T-cell (primary cell): ENCODE measurements at regions of chr14 and their contacts with region 1.

Region 1: DNA sequence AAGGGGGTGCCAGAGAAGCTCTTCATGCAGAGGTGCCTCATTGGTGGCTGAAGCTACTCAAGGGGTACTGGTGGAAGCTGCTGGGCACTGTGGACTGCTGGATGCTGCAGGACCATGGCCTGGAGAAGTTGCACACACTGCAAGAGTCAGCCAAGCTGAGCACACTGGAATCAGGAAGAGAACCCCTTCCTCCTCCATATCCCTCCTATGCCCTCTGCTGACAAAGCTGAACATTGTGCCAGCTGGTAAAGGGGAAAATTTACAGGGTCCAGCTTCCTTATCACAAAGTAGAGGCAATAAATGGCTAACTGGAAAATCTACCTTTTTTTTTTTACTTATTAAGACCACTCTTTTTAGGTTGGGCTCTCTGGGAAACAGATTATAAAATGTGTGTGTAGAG is 6.5 kb downstream of the CCDC175 start:
- DNase-seq: no peak
- ATAC-seq: no peak
- H3K4me3 ChIP-seq: no peak overlapping the region
- H3K4me3 Mint-ChIP-seq: no peak overlapping the region
- H3K27ac ChIP-seq: no peak overlapping the region
- H3K27ac Mint-ChIP-seq: no peak overlapping the region
- H3K4me1 ChIP-seq: no peaks in the 10 kb centered on the region
- H3K4me1 Mint-ChIP-seq: no peaks in the 10 kb centered on the region
- H3K27me3 ChIP-seq: peaks cover 0 to 3% of the 10 kb centered on the region in 2 experiments
- H3K27me3 Mint-ChIP-seq: peaks cover 16 to 24% of the 10 kb centered on the region in 2 donors

Region 2: GRCh38 chr14:59454131-59454530 is 116.0 kb before region 1 on chr14:
- CTCF ChIA-PET with region 1: no interaction called
- POLR2A ChIA-PET with region 1: no interaction called
- DNase-seq: no peak
- ATAC-seq: no peak
- H3K4me3 ChIP-seq: no peak overlapping the region
- H3K4me3 Mint-ChIP-seq: no peak overlapping the region
- H3K27ac ChIP-seq: no peak overlapping the region
- H3K27ac Mint-ChIP-seq: no peak overlapping the region
- H3K4me1 ChIP-seq: no peaks in the 10 kb centered on the region
- H3K4me1 Mint-ChIP-seq: no peaks in the 10 kb centered on the region
- H3K27me3 ChIP-seq: no peaks in the 10 kb centered on the region
- H3K27me3 Mint-ChIP-seq: no peaks in the 10 kb centered on the region

Region 3: DNA sequence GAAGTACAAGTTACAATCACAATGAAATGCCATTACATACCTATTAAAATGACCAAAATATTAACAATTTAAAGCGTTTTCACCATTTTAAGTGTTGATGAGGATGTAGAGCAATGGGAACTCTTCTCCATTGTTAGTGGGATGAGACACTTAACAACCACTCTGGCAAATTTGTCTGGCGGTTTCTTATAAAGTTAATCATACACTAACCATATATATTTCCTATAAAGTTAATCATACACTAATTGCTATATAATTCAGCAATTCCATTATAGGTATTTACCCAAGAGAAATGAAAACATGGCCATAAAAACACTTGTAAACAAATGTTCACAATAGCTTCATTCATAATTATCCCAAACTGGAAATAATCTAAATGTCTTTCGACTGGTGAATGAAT is 49.9 kb before region 1 on chr14:
- CTCF ChIA-PET with region 1: no interaction called
- POLR2A ChIA-PET with region 1: no interaction called
- DNase-seq: no peak
- ATAC-seq: no peak
- H3K4me3 ChIP-seq: no peak overlapping the region
- H3K4me3 Mint-ChIP-seq: no peak overlapping the region
- H3K27ac ChIP-seq: no peak overlapping the region
- H3K27ac Mint-ChIP-seq: no peak overlapping the region
- H3K4me1 ChIP-seq: no peaks in the 10 kb centered on the region
- H3K4me1 Mint-ChIP-seq: no peaks in the 10 kb centered on the region
- H3K27me3 ChIP-seq: no peaks in the 10 kb centered on the region
- H3K27me3 Mint-ChIP-seq: peaks cover 8 to 20% of the 10 kb centered on the region in 2 donors

Region 4: GRCh38 chr14:59583755-59584154 is 13.6 kb after region 1 on chr14:
- CTCF ChIA-PET with region 1: no interaction called
- POLR2A ChIA-PET with region 1: interaction called in 1 of 2 experiments, 10 read pairs
- DNase-seq: no peak
- ATAC-seq: no peak
- H3K4me3 ChIP-seq: no peak overlapping the region
- H3K4me3 Mint-ChIP-seq: no peak overlapping the region
- H3K27ac ChIP-seq: no peak overlapping the region
- H3K27ac Mint-ChIP-seq: no peak overlapping the region
- H3K4me1 ChIP-seq: no peaks in the 10 kb centered on the region
- H3K4me1 Mint-ChIP-seq: peaks cover 13 to 15% (median 15%) of the 10 kb centered on the region in 3 donors
- H3K27me3 ChIP-seq: peaks cover 0 to 4% of the 10 kb centered on the region in 2 experiments
- H3K27me3 Mint-ChIP-seq: peaks cover 4 to 7% of the 10 kb centered on the region in 2 donors